ENCODE measurements at regions of chr10 and their contacts with region 1.

Region 1: DNA sequence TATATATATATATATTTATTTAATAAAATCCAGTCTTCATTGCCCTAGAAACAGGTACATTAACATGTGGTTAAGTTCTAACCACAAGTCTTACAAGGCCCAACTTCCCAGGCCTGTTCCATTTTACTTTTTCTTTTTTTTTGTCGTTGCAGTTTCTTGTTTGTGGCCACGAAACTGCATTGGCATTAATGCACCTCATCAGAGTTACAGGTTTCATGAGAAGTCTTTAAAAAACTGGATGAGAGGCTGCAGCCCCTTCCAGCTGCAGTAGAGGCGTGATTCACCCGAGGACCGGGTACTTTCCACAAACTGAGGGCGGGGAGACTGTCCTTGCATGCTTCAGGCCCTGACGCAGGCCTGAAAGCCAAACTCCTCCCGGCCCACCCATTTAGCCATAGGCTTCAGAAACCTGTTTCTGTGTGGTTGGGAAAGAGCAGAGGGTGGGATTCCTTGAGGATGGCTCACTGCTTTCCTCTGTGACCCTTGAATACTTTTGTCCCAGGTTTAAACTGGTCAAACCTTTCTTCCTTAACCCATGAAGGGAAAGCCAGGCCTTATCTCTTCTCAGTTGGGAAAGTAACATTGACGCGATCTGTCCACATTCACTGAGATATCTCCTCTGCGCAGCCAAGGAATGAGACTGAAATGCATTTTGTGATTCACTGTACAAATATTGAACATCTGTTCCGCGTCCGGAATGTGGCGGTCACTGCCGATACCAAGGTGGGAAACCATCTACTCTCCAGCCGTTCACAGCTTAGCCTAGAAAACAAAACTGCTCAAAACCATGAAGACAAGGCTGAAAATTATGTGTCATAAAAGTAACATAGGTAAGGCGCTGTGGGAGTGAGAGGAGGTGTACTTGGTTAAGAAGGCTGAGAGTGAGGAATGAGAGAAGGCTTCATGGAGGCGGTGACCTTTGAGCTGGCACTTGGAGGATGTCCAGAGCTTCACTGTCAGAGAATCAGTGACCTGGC is 311.7 kb downstream of the GATA3 start:
- DNase-seq: peak; percentile 97 to 99
- H3K4me3 ChIP-seq: peak overlapping the region; percentile 32
- H3K4me3 Mint-ChIP-seq: peak overlapping the region; percentile 79
- H3K27ac Mint-ChIP-seq: peak overlapping the region; percentile 99
- H3K4me1 ChIP-seq: peaks cover 29% of the 10 kb centered on the region
- H3K4me1 Mint-ChIP-seq: peaks cover 28% of the 10 kb centered on the region
- H3K27me3 ChIP-seq: no peaks in the 10 kb centered on the region
- H3K27me3 Mint-ChIP-seq: no peaks in the 10 kb centered on the region
- CTCF ChIP-seq: peak; percentile 5 to 32

Region 2: GRCh38 chr10:7541137-7542095 is 824.8 kb before region 1 on chr10:
- CTCF ChIA-PET with region 1: no interaction called
- POLR2A ChIA-PET with region 1: no interaction called
- intact Hi-C with region 1: loop called (anchors 5 kb)
- DNase-seq: peak; percentile 92 to 95
- H3K4me3 ChIP-seq: no peak overlapping the region
- H3K4me3 Mint-ChIP-seq: peak overlapping the region; percentile 56
- H3K27ac Mint-ChIP-seq: peak overlapping the region; percentile 98
- H3K4me1 ChIP-seq: peaks cover 41% of the 10 kb centered on the region
- H3K4me1 Mint-ChIP-seq: peaks cover 30% of the 10 kb centered on the region
- H3K27me3 ChIP-seq: no peaks in the 10 kb centered on the region
- H3K27me3 Mint-ChIP-seq: no peaks in the 10 kb centered on the region
- CTCF ChIP-seq: peak; percentile 41 to 59

Region 3: GRCh38 chr10:8075301-8076261 is 290.6 kb before region 1 on chr10:
- CTCF ChIA-PET with region 1: interaction called, 8 read pairs
- POLR2A ChIA-PET with region 1: no interaction called
- intact Hi-C with region 1: loop called (anchors 1 kb)
- DNase-seq: peak; percentile 85
- H3K4me3 ChIP-seq: no peak overlapping the region
- H3K4me3 Mint-ChIP-seq: peak overlapping the region; percentile 56
- H3K27ac Mint-ChIP-seq: peak overlapping the region; percentile 90
- H3K4me1 ChIP-seq: peaks cover 49% of the 10 kb centered on the region
- H3K4me1 Mint-ChIP-seq: peaks cover 58% of the 10 kb centered on the region
- H3K27me3 ChIP-seq: no peaks in the 10 kb centered on the region
- H3K27me3 Mint-ChIP-seq: no peaks in the 10 kb centered on the region
- CTCF ChIP-seq: no peak

Region 4: DNA sequence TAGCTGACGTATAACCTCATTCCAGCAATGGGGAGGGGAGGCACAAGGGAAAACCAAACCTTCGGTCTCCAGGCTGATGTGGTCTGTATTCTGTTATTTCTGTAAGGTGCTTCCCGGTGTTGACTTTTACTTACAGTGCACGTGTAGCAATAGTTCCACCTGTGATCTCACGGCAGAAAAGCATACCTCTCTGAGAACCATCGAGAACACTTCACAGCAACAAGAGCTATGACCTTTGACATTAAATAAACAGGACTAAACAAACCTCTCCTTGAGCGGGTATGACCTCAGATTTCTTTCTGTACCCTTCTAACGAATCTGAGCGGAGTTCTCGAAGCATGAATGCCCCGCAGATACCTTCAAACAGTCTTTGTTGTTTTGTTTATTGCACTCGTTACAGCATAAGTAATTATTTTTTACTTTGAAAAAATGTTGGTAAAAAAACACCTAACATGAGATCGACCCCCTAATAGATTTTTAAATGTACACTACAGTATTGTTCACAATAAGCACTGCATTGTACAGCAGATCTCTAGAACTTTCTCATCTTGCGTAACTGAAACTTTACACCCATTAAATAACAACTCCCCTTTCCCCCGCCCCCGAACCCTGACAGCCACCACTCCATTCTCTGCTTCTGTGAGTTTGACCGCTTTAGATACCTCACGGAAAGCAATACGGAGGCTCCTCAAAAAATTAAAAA is 29.4 kb before region 1 on chr10:
- CTCF ChIA-PET with region 1: no interaction called
- POLR2A ChIA-PET with region 1: no interaction called
- intact Hi-C with region 1: loop called (anchors 1 kb)
- DNase-seq: peak; percentile 52 to 56
- H3K4me3 ChIP-seq: 0 out of 2 replicates have a peak overlapping the region, but pooled peaks have one; percentile 8
- H3K4me3 Mint-ChIP-seq: peak overlapping the region; percentile 61
- H3K27ac Mint-ChIP-seq: peak overlapping the region; percentile 55
- H3K4me1 ChIP-seq: peaks cover 8% of the 10 kb centered on the region; the same call in 1 of the 2 replicates
- H3K4me1 Mint-ChIP-seq: peaks cover 14% of the 10 kb centered on the region
- H3K27me3 ChIP-seq: no peaks in the 10 kb centered on the region
- H3K27me3 Mint-ChIP-seq: no peaks in the 10 kb centered on the region
- CTCF ChIP-seq: no peak

Region 5: DNA sequence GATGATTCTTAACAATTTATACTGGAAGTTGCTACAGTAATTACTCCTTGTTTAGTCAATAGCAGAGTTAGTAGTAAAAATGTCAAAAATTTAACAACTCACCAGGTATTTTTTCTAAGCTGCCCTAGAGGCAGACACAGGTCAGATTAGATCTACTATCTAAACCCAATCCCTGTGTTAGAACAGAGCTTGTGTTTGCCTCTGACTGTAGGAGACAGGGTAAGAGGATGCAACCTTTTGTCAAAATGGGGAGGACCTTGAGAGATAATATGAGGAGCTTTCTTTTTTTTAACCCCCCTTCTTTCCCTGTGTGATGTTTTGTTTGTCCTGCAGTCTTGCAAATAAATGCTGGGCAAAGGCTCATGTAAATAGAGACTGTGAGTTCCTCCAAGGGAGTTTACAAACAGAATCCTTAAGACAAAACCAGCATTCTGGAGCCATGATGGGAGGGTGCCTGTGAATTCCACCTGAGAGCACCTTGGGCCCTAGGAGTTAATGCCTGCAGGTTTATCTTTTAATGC is 41.3 kb after region 1 on chr10:
- CTCF ChIA-PET with region 1: no interaction called
- POLR2A ChIA-PET with region 1: interaction called, 7 read pairs
- intact Hi-C with region 1: loop called (anchors 1 kb)
- DNase-seq: peak; percentile 60 to 70
- H3K4me3 ChIP-seq: no peak overlapping the region
- H3K4me3 Mint-ChIP-seq: peak overlapping the region; percentile 19
- H3K27ac Mint-ChIP-seq: peak overlapping the region; percentile 15
- H3K4me1 ChIP-seq: peaks cover 46% of the 10 kb centered on the region
- H3K4me1 Mint-ChIP-seq: peaks cover 48% of the 10 kb centered on the region
- H3K27me3 ChIP-seq: no peaks in the 10 kb centered on the region
- H3K27me3 Mint-ChIP-seq: no peaks in the 10 kb centered on the region
- CTCF ChIP-seq: no peak

Region 6: DNA sequence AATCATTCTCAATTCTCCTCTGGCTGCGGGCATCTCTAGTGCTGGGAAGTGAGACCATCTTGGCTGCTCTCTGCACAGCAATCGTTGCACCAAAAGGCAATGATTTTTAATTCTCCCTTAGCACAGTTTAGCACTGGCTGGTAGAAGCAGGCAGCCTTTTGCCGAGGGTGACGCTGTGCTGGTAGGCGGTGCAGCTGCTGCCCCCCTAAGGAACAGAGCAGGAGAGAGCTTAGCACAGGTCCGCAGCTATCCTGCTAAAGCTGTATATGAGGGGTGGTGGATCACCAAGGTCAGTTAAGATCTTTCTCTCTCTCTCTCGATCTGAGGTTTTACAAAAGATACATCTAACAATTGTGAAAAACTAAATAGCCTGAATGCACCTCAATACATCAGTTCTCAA is 78.4 kb after region 1 on chr10:
- CTCF ChIA-PET with region 1: interaction called, 3 read pairs
- POLR2A ChIA-PET with region 1: no interaction called
- intact Hi-C with region 1: loop called (anchors 1 kb)
- DNase-seq: peak in 1 of 2 experiments; percentile 40
- H3K4me3 ChIP-seq: no peak overlapping the region
- H3K4me3 Mint-ChIP-seq: no peak overlapping the region
- H3K27ac Mint-ChIP-seq: no peak overlapping the region
- H3K4me1 ChIP-seq: no peaks in the 10 kb centered on the region
- H3K4me1 Mint-ChIP-seq: no peaks in the 10 kb centered on the region
- H3K27me3 ChIP-seq: no peaks in the 10 kb centered on the region; the same call in 1 of the 2 replicates
- H3K27me3 Mint-ChIP-seq: peaks cover 5% of the 10 kb centered on the region
- CTCF ChIP-seq: peak; percentile 25 to 60

Measured in Caco-2 (cell line).